Activated T-helper 2 cell treated with anti-CD3 and anti-CD28 coated beads, Interferon-gamma antibody, Interleukin-2, Interleukin-4, amounts not matched to agents 10 μg/mL and 5 μg/mL and 100 μg/mL, durations not matched to agents 14 hours and 24 hours and 36 hours (primary cell): ENCODE measurements at regions of chr10 and their contacts with region 1.

Region 1: DNA sequence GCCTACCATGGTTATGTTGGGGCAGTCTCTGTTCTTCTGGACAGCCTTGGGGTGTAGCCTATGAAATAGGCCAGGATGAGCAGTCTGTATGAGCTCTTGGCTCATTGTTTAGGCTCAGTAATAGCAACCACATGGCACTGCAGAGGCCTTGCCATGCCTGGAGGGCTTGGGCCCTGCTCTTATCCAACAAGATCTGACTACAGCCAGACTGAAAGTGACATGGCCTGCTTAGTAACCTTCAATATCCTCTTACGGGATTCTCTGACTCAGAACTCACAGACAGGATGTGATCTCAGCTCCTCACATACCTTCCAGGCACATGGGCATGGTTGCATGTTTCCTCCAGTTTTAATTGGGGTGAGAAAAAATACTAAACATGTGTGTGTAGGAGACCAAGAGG is 289.3 kb downstream of the PTEN start:
- DNase-seq: peak; percentile 39
- H3K4me3 Mint-ChIP-seq: no peak overlapping the region
- H3K27ac Mint-ChIP-seq: peak overlapping the region; percentile 89
- H3K4me1 Mint-ChIP-seq: peaks cover 40% of the 10 kb centered on the region
- H3K27me3 Mint-ChIP-seq: peaks cover 7% of the 10 kb centered on the region

Region 2: DNA sequence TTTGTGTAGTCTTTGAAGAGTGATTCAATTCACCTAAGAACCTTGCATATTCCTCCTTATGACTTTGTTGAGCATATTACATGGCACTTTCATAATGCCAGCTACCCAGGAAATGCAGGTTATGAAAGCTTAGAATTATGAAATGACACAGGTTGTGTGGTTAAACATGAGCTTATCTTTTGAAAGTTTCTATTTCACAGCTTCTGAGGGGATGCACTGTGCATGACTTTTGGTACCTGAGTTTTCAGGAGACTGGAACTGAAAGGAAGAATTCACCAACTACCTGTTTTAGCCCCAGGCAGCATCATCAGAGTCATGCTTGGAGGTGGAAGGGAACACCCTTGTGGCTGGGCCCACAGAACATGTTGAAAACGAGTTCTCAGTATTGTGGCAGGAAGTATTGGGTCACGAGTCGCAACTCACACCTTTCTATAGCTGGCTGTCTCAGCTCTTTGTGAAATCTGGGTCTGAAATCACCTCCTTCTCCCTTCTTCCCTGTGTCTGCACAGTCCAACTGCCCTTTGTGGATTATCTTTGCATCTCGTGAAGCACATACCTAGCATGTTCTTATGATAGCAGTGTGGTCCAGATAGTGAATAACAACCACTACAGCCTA is 61.1 kb before region 1 on chr10:
- intact Hi-C with region 1: loop called (anchors 1 kb)
- DNase-seq: peak; percentile 71
- H3K4me3 Mint-ChIP-seq: no peak overlapping the region
- H3K27ac Mint-ChIP-seq: no peak overlapping the region
- H3K4me1 Mint-ChIP-seq: peaks cover 34% of the 10 kb centered on the region
- H3K27me3 Mint-ChIP-seq: peaks cover 56% of the 10 kb centered on the region

Region 3: DNA sequence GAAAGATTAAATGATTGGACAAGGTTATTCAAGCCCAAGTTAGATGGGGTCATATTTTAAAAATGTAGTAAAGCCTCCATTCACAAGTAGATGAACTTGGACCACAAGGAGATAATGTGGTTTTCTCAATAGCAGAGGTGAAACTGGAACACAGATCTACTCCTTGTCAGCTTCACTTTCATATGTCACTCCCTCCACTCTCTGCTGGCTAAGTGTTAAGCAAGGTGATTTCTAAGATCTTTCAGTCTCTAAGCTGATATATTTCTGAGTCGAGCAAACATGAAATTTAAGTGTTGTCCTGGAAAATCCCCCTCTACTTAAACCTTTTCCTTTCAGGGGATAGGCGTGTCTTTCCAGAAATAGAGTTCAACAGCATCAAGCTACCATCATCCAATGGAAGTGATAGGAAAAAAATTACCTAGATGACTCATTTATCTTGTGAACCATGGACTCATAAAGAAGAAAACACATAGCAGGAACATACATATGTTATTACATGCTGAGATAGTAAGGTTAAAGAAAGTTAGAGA is 14.3 kb before region 1 on chr10:
- intact Hi-C with region 1: loop called (anchors 1 kb)
- DNase-seq: no peak
- H3K4me3 Mint-ChIP-seq: no peak overlapping the region
- H3K27ac Mint-ChIP-seq: no peak overlapping the region
- H3K4me1 Mint-ChIP-seq: peaks cover 24% of the 10 kb centered on the region
- H3K27me3 Mint-ChIP-seq: peaks cover 22% of the 10 kb centered on the region

Region 4: GRCh38 chr10:88172159-88172558 is 19.4 kb after region 1 on chr10:
- intact Hi-C with region 1: loop called (anchors 2 kb)
- DNase-seq: no peak
- H3K4me3 Mint-ChIP-seq: no peak overlapping the region
- H3K27ac Mint-ChIP-seq: no peak overlapping the region
- H3K4me1 Mint-ChIP-seq: peaks cover 33% of the 10 kb centered on the region
- H3K27me3 Mint-ChIP-seq: peaks cover 22% of the 10 kb centered on the region

Region 5: GRCh38 chr10:88194041-88194887 is 41.5 kb after region 1 on chr10:
- intact Hi-C with region 1: loop called (anchors 2 kb)
- DNase-seq: peak; percentile 20
- H3K4me3 Mint-ChIP-seq: no peak overlapping the region
- H3K27ac Mint-ChIP-seq: peak overlapping the region; percentile 33
- H3K4me1 Mint-ChIP-seq: peaks cover 17% of the 10 kb centered on the region
- H3K27me3 Mint-ChIP-seq: peaks cover 4% of the 10 kb centered on the region